CD4-positive, alpha-beta memory T cell (primary cell): ENCODE measurements at regions of chr2 and their contacts with region 1.

Region 1: GRCh38 chr2:60881047-60881932 is at the start of gene REL:
- DNase-seq: peak; percentile 88 to 91 (median 89)
- H3K4me3 ChIP-seq: peak within 1 kb of the TSS; percentile 96 to 100
- H3K4me3 Mint-ChIP-seq: peak within 1 kb of the TSS; percentile 92 to 100 (median 96)
- H3K27ac ChIP-seq: peak within 1 kb of the TSS; percentile 100
- H3K27ac Mint-ChIP-seq: peak within 1 kb of the TSS; percentile 91 to 100 (median 99)
- H3K4me1 ChIP-seq: peaks cover 33% of the 10 kb centered on the region
- H3K4me1 Mint-ChIP-seq: peaks cover 14 to 41% (median 31%) of the 10 kb centered on the region in 4 donors
- H3K27me3 ChIP-seq: no peaks in the 10 kb centered on the region
- H3K27me3 Mint-ChIP-seq: no peaks in the 10 kb centered on the region
- total RNA-seq, gene REL: 26.5 to 28.0 TPM

Region 2: DNA sequence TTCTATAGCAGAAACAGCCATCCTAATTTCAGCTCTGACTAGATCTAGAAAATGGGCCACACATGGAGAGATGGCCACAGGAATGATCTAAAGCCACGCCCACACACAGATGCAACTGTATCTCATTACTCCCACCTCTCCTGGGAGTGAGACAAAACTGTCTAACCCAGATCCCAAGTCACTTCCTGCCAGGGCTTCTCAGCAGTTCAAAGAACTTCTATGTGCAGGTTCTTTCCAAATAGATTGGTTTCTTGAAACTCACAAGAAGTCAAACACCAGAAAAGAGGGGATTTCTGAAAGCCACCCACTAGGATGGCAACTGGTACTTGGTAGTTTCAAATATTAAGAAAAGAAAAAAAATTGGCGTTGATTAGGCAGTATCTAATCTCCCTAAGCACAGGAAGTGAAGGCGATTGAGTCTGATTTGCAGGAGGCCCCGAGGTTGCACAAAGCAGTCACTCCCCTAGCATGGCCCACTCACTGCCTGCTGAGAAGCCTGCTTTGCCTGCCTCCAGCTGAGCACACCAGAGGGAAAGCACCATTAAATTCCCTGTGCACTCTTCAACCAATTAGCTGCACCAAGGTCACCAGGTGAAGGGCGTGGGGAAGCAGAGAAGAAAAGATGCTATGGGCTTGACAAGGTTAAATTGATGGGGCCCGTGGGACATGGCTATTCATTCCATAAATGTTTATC is 74.2 kb before region 1 on chr2:
- CTCF ChIA-PET with region 1: interaction called, 14 read pairs
- POLR2A ChIA-PET with region 1: interaction called, 38 read pairs
- intact Hi-C with region 1: loop called (anchors 1 kb)
- DNase-seq: peak; percentile 37 to 74 (median 41)
- H3K4me3 ChIP-seq: no peak overlapping the region
- H3K4me3 Mint-ChIP-seq: peak overlapping the region in 7 of 8 donors; percentile 29 to 75 (median 69)
- H3K27ac ChIP-seq: peak overlapping the region; percentile 51
- H3K27ac Mint-ChIP-seq: peak overlapping the region; percentile 86 to 97 (median 93)
- H3K4me1 ChIP-seq: peaks cover 49% of the 10 kb centered on the region
- H3K4me1 Mint-ChIP-seq: peaks cover 30 to 60% (median 48%) of the 10 kb centered on the region in 4 donors
- H3K27me3 ChIP-seq: no peaks in the 10 kb centered on the region
- H3K27me3 Mint-ChIP-seq: no peaks in the 10 kb centered on the region

Region 3: GRCh38 chr2:60867848-60868247 is 13.4 kb before region 1 on chr2:
- CTCF ChIA-PET with region 1: interaction called, 21 read pairs
- POLR2A ChIA-PET with region 1: interaction called, 99 read pairs
- intact Hi-C with region 1: loop called (anchors 1 kb)
- DNase-seq: peak in 4 of 5 donors; percentile 54 to 65 (median 60)
- H3K4me3 ChIP-seq: no peak overlapping the region
- H3K4me3 Mint-ChIP-seq: peak overlapping the region in 7 of 8 donors; percentile 53 to 87 (median 69)
- H3K27ac ChIP-seq: peak overlapping the region; percentile 35
- H3K27ac Mint-ChIP-seq: peak overlapping the region; percentile 72 to 96 (median 93)
- H3K4me1 ChIP-seq: peaks cover 19% of the 10 kb centered on the region
- H3K4me1 Mint-ChIP-seq: peaks cover 14 to 23% (median 21%) of the 10 kb centered on the region in 4 donors
- H3K27me3 ChIP-seq: no peaks in the 10 kb centered on the region
- H3K27me3 Mint-ChIP-seq: peaks cover under 1% of the 10 kb centered on the region in 2 donors

Region 4: GRCh38 chr2:60992985-60993392 is 111.7 kb after region 1 on chr2:
- CTCF ChIA-PET with region 1: interaction called, 11 read pairs
- POLR2A ChIA-PET with region 1: interaction called, 18 read pairs
- intact Hi-C with region 1: loop called (anchors 5 kb)
- DNase-seq: peak in 4 of 5 donors; percentile 46 to 61 (median 52)
- H3K4me3 ChIP-seq: peak overlapping the region; percentile 1 to 44
- H3K4me3 Mint-ChIP-seq: peak overlapping the region; percentile 71 to 80 (median 78)
- H3K27ac ChIP-seq: no peak overlapping the region
- H3K27ac Mint-ChIP-seq: peak overlapping the region; percentile 62 to 97 (median 95)
- H3K4me1 ChIP-seq: peaks cover 7% of the 10 kb centered on the region
- H3K4me1 Mint-ChIP-seq: peaks cover 4 to 12% (median 9%) of the 10 kb centered on the region in 4 donors
- H3K27me3 ChIP-seq: no peaks in the 10 kb centered on the region
- H3K27me3 Mint-ChIP-seq: no peaks in the 10 kb centered on the region

Region 5: GRCh38 chr2:61016808-61017555 is 135.7 kb after region 1 on chr2:
- CTCF ChIA-PET with region 1: interaction called, 3 read pairs
- POLR2A ChIA-PET with region 1: interaction called, 24 read pairs
- intact Hi-C with region 1: loop called (anchors 2 kb)
- DNase-seq: peak; percentile 73 to 82 (median 76)
- H3K4me3 ChIP-seq: peak overlapping the region; percentile 91 to 99
- H3K4me3 Mint-ChIP-seq: peak overlapping the region; percentile 98 to 100 (median 99)
- H3K27ac ChIP-seq: peak overlapping the region; percentile 80
- H3K27ac Mint-ChIP-seq: peak overlapping the region; percentile 92 to 98 (median 97)
- H3K4me1 ChIP-seq: peaks cover 25% of the 10 kb centered on the region
- H3K4me1 Mint-ChIP-seq: peaks cover 13 to 52% (median 36%) of the 10 kb centered on the region in 4 donors
- H3K27me3 ChIP-seq: no peaks in the 10 kb centered on the region
- H3K27me3 Mint-ChIP-seq: no peaks in the 10 kb centered on the region

Region 6: DNA sequence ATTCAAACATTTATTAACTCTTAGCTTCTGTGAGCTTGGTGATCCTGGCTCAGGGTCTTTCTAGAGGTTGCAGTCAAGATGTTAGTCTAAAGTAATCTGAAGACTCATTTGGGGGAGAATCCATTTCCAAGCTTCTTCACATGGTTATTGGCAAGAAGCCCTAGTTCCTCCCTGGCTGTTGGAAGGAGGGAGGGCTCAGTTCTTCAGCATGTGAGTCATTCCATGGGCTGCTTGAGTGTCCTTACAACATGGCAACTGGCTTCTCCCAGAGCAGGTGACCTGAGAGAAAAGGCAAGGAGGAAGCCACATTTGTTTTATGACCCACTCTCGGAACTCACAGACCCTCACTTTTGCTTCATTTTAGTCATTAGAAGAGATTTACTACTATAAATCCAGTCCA is 270.1 kb after region 1 on chr2:
- CTCF ChIA-PET with region 1: no interaction called
- POLR2A ChIA-PET with region 1: no interaction called
- intact Hi-C with region 1: no loop called
- DNase-seq: no peak
- H3K4me3 ChIP-seq: no peak overlapping the region
- H3K4me3 Mint-ChIP-seq: no peak overlapping the region
- H3K27ac ChIP-seq: no peak overlapping the region
- H3K27ac Mint-ChIP-seq: no peak overlapping the region
- H3K4me1 ChIP-seq: no peaks in the 10 kb centered on the region
- H3K4me1 Mint-ChIP-seq: peaks cover 0 to 3% (median 1%) of the 10 kb centered on the region in 4 donors
- H3K27me3 ChIP-seq: no peaks in the 10 kb centered on the region
- H3K27me3 Mint-ChIP-seq: no peaks in the 10 kb centered on the region